HEK293T (cell line): ENCODE measurements at regions of chr21 and their contacts with region 1.

Region 1: DNA sequence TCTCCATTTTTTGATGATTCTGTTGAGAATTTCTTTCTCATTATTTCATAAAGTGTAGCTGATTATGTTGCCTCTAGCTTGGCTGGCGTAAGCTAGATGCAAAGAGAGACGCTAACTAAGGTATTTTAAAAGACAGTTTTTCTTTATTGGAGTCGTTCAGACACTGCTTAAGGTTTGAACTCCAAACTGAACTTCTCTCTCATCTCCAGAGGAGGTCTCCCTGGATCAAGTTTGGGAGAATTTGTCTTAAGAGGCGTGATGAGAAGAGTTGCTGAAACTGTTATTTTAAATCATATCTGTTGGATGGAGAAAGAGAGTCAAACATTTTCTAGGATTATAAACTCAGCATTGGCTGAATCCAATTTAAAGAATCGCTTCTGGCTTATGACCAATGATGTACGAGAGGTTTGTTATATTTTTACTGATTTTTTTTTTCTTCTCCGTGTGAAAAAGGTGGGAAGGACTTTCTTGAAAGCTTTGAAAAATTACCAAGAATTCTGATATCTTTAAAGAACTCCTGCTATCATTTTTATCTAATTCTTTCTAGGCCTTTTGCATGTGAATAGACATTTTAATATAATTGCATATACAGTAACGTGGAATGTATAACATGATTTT is 34.0 kb downstream of the MAP3K7CL start:
- DNase-seq: peak; percentile 53

Region 2: GRCh38 chr21:29343519-29343918 is 179.1 kb after region 1 on chr21:
- CTCF ChIA-PET with region 1: interaction called, 19 read pairs
- POLR2A ChIA-PET with region 1: no interaction called
- DNase-seq: no peak

Region 3: GRCh38 chr21:29372063-29372802 is 207.8 kb after region 1 on chr21:
- CTCF ChIA-PET with region 1: interaction called, 12 read pairs
- POLR2A ChIA-PET with region 1: no interaction called
- DNase-seq: peak; percentile 77